Activated CD4-positive, alpha-beta T cell treated with anti-CD3 and anti-CD28 coated beads for 36 hours (primary cell): ENCODE measurements at regions of chr4 and their contacts with region 1.

Region 1: GRCh38 chr4:109406338-109406931 is 27.2 kb upstream of the SEC24B start:
- DNase-seq: peak; percentile 40
- ATAC-seq: peak; percentile 76
- H3K4me3 Mint-ChIP-seq: no peak overlapping the region
- H3K27ac Mint-ChIP-seq: no peak overlapping the region
- H3K4me1 Mint-ChIP-seq: no peaks in the 10 kb centered on the region
- H3K27me3 Mint-ChIP-seq: peaks cover 6% of the 10 kb centered on the region

Region 2: DNA sequence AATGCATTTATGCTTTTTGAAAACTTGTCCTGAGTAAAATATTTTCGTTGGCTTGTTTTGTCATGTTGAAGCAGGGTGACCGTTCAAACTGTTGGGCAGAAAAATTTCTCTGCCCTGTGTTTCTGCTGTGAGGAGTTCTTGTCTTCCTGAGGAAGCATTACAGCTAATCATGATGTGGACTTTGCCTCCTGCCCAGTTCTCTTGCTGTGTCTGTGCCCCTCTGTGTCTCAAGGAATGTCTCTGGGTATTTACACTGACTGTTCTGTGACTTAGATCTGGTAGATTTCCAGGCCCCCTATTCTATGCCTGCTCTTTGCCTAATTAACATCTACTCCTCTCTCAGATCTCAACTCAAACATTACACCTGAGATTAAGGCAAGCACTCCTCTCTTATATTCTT is 816.5 kb before region 1 on chr4:
- CTCF ChIA-PET with region 1: no interaction called
- POLR2A ChIA-PET with region 1: no interaction called
- intact Hi-C with region 1: loop called in 1 of 2 experiments (anchors 10 kb)
- DNase-seq: no peak
- ATAC-seq: no peak
- H3K4me3 Mint-ChIP-seq: no peak overlapping the region
- H3K27ac Mint-ChIP-seq: no peak overlapping the region
- H3K4me1 Mint-ChIP-seq: no peaks in the 10 kb centered on the region
- H3K27me3 Mint-ChIP-seq: no peaks in the 10 kb centered on the region

Region 3: DNA sequence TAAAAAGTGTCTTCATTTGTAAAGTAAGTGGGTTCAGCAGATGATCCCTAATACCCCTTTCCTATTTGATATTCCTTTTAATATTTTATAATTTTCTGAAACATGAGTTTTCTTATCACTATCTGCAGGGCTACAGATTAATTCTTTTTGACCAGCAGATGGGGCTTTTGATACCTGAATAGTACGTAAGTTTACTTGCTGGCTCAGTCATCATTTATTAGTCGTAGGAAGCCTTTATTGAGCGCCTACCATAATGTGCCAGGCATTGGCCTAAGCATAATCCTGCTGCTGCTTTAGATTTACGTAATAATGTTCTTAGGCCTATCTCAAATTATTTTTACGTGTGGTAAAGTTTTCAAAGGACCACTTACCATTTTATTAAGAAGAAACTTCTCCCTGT is 723.0 kb before region 1 on chr4:
- CTCF ChIA-PET with region 1: no interaction called
- POLR2A ChIA-PET with region 1: no interaction called
- intact Hi-C with region 1: loop called in 1 of 2 experiments (anchors 1 kb)
- DNase-seq: no peak
- ATAC-seq: no peak
- H3K4me3 Mint-ChIP-seq: no peak overlapping the region
- H3K27ac Mint-ChIP-seq: no peak overlapping the region
- H3K4me1 Mint-ChIP-seq: no peaks in the 10 kb centered on the region
- H3K27me3 Mint-ChIP-seq: no peaks in the 10 kb centered on the region

Region 4: DNA sequence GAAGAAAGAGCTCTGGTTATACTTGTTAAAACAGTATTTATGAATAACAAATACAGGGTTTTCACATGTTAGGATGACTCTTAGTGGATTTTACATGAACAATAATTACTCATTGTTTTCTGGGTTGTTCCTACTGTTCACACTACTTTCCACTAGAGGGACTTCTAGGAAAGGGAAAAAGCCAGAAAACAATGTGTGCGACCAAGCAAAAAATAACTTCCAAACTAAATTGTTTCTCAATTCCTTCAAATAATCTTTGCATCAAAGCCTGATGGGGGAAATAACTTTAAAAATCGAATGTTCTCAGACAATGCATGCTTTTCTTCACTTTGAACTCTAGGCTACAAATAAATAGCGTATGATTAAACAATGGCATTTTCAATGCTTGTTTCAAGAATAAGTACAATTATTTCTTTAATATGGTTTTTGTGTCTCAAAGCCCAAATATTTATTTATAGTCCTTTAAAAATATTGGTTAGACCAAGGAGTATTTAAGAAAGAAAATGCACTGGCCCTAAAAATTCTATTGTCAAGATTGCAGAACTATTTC is 571.5 kb before region 1 on chr4:
- CTCF ChIA-PET with region 1: interaction called, 4 read pairs
- POLR2A ChIA-PET with region 1: no interaction called
- intact Hi-C with region 1: loop called in 1 of 2 experiments (anchors 1 kb)
- DNase-seq: no peak
- ATAC-seq: peak; percentile 51
- H3K4me3 Mint-ChIP-seq: no peak overlapping the region
- H3K27ac Mint-ChIP-seq: no peak overlapping the region
- H3K4me1 Mint-ChIP-seq: peaks cover 4% of the 10 kb centered on the region
- H3K27me3 Mint-ChIP-seq: peaks cover 4% of the 10 kb centered on the region